SK-N-SH (cell line): ENCODE measurements at regions of chr1 and their contacts with region 1.

Region 1: GRCh38 chr1:193121616-193122593 is at the start of gene CDC73:
- DNase-seq: peak; percentile 98
- H3K4me3 ChIP-seq: peak within 1 kb of the TSS; percentile 78 to 80
- H3K27ac ChIP-seq: peak within 1 kb of the TSS; percentile 97
- H3K4me1 ChIP-seq: peaks cover 0 to 4% of the 10 kb centered on the region in 2 experiments; a peak in 3 of 4 replicates
- H3K27me3 ChIP-seq: no peaks in the 10 kb centered on the region
- CTCF ChIP-seq: peak; percentile 81
- EP300 ChIP-seq: peak in 1 of 2 experiments; percentile 46; a peak in 2 of 4 replicates
- RAD21 ChIP-seq: peak; percentile 71
- polyA plus RNA-seq, gene CDC73: 13.4 and 17.3 TPM in 2 replicates

Region 2: GRCh38 chr1:193059268-193060225 is 62.4 kb before region 1 on chr1 and contains the starts of genes RO60 and UCHL5:
- CTCF ChIA-PET with region 1: interaction called, 10 read pairs
- POLR2A ChIA-PET with region 1: interaction called, 5 read pairs
- DNase-seq: peak; percentile 93
- H3K4me3 ChIP-seq: peak within 1 kb of the TSS; percentile 85 to 99
- H3K27ac ChIP-seq: peak within 1 kb of the TSS; percentile 98 to 99
- H3K4me1 ChIP-seq: peaks cover 19 to 23% of the 10 kb centered on the region in 2 experiments; a peak in 3 of 4 replicates
- H3K27me3 ChIP-seq: no peaks in the 10 kb centered on the region
- CTCF ChIP-seq: no peak
- EP300 ChIP-seq: peak; percentile 14 to 18; a peak in 3 of 4 replicates
- RAD21 ChIP-seq: no peak
- polyA plus RNA-seq, gene RO60: 6.4 and 10.6 TPM in 2 replicates
- polyA plus RNA-seq, gene UCHL5: 14.9 and 15.7 TPM in 2 replicates

Region 3: DNA sequence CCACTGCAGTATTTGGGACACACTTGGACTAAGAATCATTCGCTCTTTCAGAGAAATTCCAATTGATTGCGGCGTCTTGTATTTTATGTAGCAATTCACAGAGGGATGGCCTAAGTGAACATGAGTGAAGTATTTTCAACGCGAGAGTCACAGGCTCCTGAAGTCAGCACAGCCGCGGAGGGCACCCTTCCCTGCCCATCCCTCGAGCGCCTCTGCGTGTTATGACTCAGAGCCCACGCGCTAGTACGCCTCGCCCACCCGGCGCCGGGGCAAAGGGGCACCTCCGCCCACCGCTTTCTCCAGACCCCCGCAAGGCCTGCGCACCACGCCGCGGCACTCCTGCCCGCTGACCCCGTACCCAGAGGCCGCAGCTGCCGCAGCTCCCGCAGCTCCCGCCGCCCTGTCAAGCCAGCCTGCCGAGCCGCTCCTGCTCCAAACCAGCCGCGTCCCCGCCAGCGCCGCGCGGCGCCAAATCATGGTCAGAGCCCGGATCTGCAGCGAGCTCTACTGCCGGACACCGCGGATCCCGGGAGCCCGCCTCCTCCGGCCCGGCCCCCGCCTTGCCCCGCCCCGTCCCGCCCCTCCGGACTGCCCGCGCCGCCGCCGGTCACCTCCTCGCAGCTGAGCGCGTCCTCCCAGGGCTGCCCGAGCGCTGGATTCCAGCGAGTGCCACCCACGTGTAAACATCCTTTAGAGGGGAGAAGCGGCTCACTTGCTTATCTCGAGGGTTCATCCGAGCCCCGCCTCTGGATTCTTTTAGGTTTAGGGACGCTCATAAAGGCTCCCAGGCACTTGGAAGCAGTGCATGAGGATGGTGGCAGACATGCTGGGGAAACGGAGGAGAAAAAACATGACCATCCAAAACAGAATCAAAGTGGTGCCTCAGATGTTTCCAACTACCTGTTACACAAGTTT is 16.7 kb before region 1 on chr1 and contains the start of gene GLRX2:
- CTCF ChIA-PET with region 1: interaction called, 35 read pairs
- POLR2A ChIA-PET with region 1: interaction called, 14 read pairs
- DNase-seq: peak; percentile 99
- H3K4me3 ChIP-seq: peak within 1 kb of the TSS; percentile 76 to 87
- H3K27ac ChIP-seq: peak within 1 kb of the TSS; percentile 94
- H3K4me1 ChIP-seq: peaks cover 7 to 11% of the 10 kb centered on the region in 2 experiments; a peak in 3 of 4 replicates
- H3K27me3 ChIP-seq: no peaks in the 10 kb centered on the region
- CTCF ChIP-seq: peak; percentile 9; the same call in 1 of the 2 replicates
- EP300 ChIP-seq: 0 out of 4 replicates have a peak, but pooled peaks of 1 of the 2 experiments have one; percentile 12
- RAD21 ChIP-seq: peak; percentile 22
- polyA plus RNA-seq, gene GLRX2: 9.4 and 12.8 TPM in 2 replicates

Region 4: GRCh38 chr1:193111641-193112090 is 10.2 kb before region 1 on chr1:
- CTCF ChIA-PET with region 1: interaction called, 35 read pairs
- POLR2A ChIA-PET with region 1: interaction called, 3 read pairs
- DNase-seq: no peak
- H3K4me3 ChIP-seq: no peak overlapping the region
- H3K27ac ChIP-seq: peak overlapping the region; percentile 60 to 78; a peak in 3 of 4 replicates
- H3K4me1 ChIP-seq: peaks cover 2 to 15% of the 10 kb centered on the region in 2 experiments; a peak in 3 of 4 replicates
- H3K27me3 ChIP-seq: no peaks in the 10 kb centered on the region
- CTCF ChIP-seq: no peak
- EP300 ChIP-seq: no peak
- RAD21 ChIP-seq: no peak